Activated CD8-positive, alpha-beta T cell treated with anti-CD3 and anti-CD28 coated beads, Interleukin-2, amount 10 ng/mL, durations not matched to agents 7 days and 5 days (primary cell): ENCODE measurements at regions of chr4 and their contacts with region 1.

Region 1: DNA sequence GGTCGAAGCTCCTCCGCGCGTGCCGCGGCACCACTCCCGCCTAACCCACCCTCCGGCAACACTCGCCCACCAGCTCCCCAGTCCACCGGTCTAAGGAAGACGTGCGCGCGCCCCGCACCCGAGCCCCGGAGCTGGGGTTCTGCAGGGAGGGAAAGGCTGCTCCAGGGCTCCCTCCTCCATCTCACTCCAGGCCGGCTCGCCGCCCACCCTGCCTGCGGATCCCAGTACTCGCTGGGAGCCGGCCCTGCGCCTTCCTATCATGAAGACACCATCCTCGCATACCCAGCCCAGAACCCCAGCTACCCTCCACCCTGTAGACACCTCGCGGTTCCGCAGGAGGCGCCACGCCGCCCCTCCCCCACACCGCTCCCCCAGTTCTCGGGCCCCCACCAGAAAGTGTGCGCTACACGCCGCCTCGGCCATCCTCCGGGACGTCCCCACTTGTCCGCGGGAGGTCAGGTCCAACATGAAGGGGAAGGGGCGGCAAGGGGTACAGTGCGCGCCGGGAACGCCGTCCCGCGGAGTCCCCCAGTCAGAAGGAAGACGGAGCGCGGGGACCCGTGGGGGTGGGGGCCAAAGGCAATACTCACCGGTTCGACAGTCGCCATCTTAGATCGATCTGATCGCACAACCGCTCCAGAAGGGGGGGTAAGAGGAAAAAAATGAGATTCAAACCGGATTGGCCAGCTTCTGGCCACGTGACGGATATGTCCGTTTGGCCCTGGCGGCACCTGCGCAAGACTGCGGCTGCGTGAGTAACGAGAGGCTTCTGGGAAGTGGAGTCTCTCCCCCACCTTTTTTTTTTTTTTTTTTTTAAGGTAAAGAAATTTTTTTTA is at the start of gene EIF4E:
- DNase-seq: peak; percentile 98
- ATAC-seq: peak; percentile 81
- H3K4me3 Mint-ChIP-seq: peak within 1 kb of the TSS; percentile 90
- H3K27ac Mint-ChIP-seq: peak within 1 kb of the TSS; percentile 96
- H3K4me1 Mint-ChIP-seq: peaks cover 46% of the 10 kb centered on the region
- H3K27me3 Mint-ChIP-seq: no peaks in the 10 kb centered on the region
- total RNA-seq, gene EIF4E: 103 to 105 TPM

Region 2: GRCh38 chr4:98260579-98261290 is 668.0 kb before region 1 on chr4:
- CTCF ChIA-PET with region 1: no interaction called
- POLR2A ChIA-PET with region 1: interaction called, 23 read pairs
- DNase-seq: peak; percentile 93
- ATAC-seq: peak; percentile 89
- H3K4me3 Mint-ChIP-seq: peak overlapping the region; percentile 93
- H3K27ac Mint-ChIP-seq: peak overlapping the region; percentile 97
- H3K4me1 Mint-ChIP-seq: peaks cover 42% of the 10 kb centered on the region
- H3K27me3 Mint-ChIP-seq: no peaks in the 10 kb centered on the region

Region 3: DNA sequence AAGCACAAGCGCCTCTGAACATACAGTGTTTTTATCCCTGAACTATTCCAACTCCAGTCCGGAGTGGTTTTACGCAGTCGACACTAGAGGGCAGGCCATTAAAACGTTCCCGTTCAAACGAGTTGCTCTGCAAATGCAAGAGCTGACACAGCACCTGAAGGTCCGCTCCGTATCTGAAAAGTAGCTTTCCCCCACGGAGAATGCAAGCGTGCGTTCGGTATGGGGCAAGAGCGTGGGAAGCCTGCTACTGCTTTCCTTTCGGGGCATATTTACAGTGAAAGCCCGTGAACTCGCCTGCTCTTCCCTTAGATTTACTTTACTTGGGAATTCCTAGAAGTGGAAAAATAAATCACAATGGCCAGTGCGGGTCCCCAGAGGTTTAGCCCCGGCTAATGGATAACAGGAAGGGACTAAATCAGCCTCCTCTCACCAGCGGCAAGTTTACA is 461.1 kb before region 1 on chr4:
- CTCF ChIA-PET with region 1: interaction called, 14 read pairs
- POLR2A ChIA-PET with region 1: interaction called, 9 read pairs
- DNase-seq: peak; percentile 81
- ATAC-seq: peak; percentile 92
- H3K4me3 Mint-ChIP-seq: peak overlapping the region; percentile 62
- H3K27ac Mint-ChIP-seq: peak overlapping the region; percentile 69
- H3K4me1 Mint-ChIP-seq: peaks cover 33% of the 10 kb centered on the region
- H3K27me3 Mint-ChIP-seq: no peaks in the 10 kb centered on the region

Region 4: DNA sequence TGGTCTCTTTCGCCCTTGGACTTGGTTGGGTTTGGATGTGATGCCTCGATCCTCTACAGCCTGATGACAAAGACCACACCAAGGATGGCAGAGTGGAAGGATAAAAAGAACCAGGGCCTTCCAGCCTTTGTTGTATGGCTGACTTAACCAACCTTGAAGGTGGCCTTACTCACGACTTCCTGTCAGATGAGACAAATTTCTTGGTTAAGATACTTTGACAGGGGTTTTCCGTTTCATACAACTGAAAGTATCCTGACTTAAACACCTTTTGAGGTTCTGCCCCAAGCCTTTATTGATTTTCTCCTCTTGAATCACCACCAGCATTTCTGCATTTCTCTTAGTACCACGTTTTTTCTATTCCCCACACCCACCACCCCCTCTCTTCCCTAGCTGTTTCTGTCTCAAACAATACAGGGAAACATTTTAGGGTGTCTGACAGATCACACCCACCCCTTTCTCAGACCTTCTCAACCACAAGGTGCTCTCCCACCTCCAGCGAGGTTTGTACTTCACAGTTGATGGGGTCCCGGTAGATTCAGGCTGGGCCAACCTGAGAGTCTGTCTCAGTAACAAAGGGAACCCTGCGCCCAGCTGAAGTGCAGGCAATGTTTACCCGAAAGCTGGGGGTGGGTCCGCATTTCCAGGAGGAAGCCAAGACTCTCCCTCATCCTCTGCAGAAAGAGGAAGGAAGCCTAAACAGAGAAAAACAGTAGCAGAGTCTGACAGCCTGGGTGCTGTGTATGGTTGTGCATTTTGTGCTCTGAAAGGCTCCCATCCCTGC is 265.3 kb before region 1 on chr4:
- CTCF ChIA-PET with region 1: no interaction called
- POLR2A ChIA-PET with region 1: interaction called, 15 read pairs
- DNase-seq: peak; percentile 66
- ATAC-seq: peak; percentile 67
- H3K4me3 Mint-ChIP-seq: peak overlapping the region; percentile 75
- H3K27ac Mint-ChIP-seq: peak overlapping the region; percentile 100
- H3K4me1 Mint-ChIP-seq: peaks cover 52% of the 10 kb centered on the region
- H3K27me3 Mint-ChIP-seq: no peaks in the 10 kb centered on the region

Region 5: DNA sequence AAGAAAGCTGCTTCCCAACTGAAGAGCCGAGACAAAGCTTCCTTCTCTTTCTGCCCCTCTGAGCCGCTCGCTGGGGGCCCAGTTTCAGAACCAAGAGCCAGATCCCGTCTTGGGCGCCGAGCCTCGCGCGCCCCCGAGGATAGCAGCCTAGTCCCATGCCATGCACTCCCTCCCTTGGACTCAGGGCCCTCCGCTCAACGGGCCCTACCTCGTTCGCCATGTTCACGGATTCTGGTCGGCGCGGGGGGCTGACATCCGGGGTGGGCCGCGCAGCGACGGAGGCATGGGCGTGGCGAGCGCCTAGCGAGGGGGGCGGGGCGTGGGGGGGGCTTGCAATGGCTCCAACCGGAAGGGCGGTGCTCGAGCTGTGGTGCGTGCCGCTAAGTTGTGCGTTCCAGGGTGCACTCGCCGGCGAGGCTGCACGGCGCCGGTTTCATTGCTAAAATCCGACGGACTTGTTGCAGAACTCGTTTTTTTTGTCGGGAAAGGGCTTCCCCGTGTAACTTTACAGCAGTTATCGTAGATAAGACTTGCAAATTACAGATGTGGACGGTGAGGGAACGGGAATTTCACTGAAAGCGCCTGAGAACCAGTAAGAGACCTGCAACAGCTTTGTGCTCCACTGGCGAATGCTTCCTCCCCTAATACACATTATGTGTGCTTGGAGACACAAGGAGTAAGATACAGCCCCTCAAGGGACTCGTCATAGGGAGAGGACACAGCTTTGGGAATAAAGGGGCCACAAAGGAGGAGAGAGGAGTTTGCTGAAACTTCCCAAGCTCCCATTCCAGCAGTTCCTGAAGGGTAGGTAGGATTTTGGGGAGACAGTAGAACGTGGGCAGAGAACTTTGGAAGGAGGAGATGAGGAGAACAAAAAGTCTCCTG is 160.0 kb after region 1 on chr4 and contains the start of gene ADH5:
- CTCF ChIA-PET with region 1: interaction called, 4 read pairs
- POLR2A ChIA-PET with region 1: interaction called, 28 read pairs
- DNase-seq: peak; percentile 94
- ATAC-seq: peak; percentile 97
- H3K4me3 Mint-ChIP-seq: peak within 1 kb of the TSS; percentile 97
- H3K27ac Mint-ChIP-seq: peak within 1 kb of the TSS; percentile 99
- H3K4me1 Mint-ChIP-seq: peaks cover 45% of the 10 kb centered on the region
- H3K27me3 Mint-ChIP-seq: no peaks in the 10 kb centered on the region
- total RNA-seq, gene ADH5: 107 to 113 TPM